AG04449 (cell line): ENCODE measurements at regions of chr18 and their contacts with region 1.

Region 1: DNA sequence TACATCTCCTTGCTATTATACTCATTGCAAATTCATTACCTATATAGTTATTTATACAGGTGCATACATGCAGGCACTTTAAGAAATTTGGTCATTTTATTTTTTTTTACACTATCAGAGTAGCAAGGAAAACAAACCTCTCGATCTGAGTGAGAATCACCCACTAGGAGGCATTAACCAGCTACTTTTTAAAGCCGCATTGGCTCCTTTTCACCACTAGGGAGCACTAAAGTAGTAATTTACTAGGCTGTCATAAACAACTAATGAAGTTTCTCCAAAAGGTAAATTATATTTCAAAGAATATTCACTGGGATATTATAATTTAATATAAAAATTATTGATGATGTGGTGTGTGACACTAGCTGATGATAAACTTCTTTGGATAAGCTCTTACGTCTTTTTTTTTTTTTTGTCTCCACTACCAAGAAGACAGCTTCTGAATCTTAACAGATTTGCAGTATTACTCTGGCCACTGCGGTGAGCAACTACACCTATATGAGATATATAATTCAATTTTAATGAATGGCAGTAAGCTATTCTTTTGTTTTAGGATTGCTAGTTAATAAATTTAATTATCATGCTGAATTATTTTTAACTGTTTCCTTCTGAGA is 101.9 kb downstream of the NOL4 start:
- DNase-seq: no peak
- H3K4me3 ChIP-seq: no peak overlapping the region
- CTCF ChIP-seq: peak; percentile 78

Region 2: GRCh38 chr18:34251919-34252318 is 129.1 kb after region 1 on chr18:
- CTCF ChIA-PET with region 1: no interaction called
- POLR2A ChIA-PET with region 1: no interaction called
- DNase-seq: no peak
- H3K4me3 ChIP-seq: no peak overlapping the region
- CTCF ChIP-seq: no peak

Region 3: DNA sequence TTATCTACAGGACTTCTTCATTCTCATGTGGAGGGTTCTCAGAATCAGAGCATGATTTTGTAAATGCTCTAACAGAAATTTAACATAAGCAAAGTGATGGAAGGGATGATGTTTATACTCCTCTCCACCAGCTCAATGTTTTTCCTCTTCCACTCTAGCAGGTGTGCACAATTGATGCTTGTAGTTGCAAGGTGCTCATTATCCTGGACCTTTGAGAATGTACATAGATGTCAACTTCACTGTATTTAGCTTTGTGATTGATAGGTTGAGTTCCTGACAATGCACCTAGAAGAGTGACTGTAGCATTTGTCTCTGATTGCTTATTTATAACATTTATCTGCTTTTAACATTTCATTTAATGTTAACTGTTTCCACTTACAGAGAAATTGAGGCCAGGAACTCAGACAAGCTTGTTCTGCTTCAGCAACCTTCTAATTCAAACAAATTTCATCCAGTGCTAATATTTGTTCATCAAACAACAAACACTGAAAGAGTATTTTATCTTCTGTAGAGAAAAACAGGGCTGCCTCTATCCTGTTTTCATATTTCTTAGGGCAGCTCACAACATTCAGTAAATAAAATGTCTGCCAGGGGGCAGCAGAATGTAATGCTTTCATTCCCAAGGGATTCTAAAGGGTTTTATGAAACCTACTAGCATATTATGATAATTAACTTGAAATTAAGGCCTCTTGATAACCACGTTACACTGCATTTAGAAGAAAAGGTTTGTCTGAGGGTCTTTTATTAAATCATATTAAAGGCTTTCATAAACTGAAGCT is 229.7 kb after region 1 on chr18:
- CTCF ChIA-PET with region 1: no interaction called
- POLR2A ChIA-PET with region 1: no interaction called
- DNase-seq: no peak
- H3K4me3 ChIP-seq: no peak overlapping the region
- CTCF ChIP-seq: no peak

Region 4: DNA sequence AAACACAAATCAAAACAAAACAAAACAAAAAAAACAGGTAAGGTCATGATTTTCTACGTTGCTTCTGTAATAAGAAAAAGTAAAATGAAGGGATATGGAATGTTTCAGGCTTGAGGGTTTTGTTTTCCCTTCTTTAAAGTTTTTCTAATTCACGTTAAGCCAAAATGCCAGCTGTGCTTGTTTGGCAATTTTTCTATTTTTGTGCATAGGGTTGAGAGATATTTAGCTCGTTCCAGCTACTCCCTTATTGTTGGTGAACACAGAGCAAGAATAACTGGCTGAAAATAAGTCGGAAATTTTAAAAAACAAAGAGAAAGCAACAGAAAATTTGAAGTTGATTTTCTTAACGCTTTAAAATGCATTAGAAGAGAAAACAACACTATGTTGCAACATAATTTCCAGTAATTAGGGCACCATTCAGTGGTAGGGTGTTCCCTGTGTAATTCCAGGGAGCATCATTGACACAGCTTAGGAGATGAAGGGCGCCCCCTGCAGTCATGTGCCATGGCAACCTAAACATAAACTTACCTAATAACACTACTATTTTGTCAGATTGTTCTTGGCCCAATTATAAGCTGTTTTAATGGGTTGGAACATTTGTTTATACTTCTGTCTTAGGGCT is 686.7 kb after region 1 on chr18:
- CTCF ChIA-PET with region 1: interaction called, 11 read pairs
- POLR2A ChIA-PET with region 1: no interaction called
- DNase-seq: no peak
- H3K4me3 ChIP-seq: no peak overlapping the region
- CTCF ChIP-seq: peak; percentile 35